Posterior vena cava (tissue), 2 donors: ENCODE measurements at regions of chr10 and their contacts with region 1.

Region 1: DNA sequence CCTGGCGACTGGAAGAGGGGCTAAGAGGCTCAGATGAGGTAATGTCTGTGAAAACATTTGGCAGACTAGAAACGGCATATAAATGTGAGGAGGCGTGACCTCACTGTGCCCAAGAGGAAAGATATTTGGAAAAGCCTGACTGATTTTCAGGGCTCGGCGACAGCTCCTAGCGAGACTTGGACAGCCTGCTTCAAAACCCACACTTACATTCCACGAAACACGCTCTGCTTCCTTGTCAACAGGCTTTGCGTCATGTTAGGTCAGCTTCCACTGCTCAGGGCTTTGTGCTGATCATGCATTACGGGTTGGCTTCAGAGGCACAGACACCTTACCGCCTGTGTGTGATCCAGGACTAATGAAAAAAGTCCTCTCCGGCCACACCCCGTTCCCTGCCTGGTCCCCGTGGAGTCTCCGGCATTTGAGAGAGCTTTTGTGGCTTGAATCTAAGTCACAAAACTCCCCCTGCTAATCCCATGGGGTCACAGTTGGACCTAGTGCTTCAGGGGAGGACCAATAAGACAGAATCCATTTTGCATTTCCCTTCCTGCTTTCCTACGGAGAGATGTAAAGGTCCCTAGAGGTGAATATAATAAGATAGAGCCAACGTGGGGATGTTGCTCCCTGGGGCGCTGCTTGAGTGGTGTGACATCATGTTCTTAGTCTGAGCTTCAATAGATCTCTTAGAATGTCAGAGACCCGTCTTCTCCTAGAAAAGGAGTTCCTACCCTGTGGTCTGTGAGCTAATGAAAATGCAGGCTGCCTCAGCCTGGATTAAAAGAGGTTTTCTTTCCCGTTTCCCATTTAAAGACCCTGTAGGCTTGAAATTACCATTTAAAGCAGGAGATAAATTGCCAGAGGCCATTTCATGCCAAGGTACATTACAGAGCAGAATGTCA is 25.5 kb downstream of the FGFBP3 start:
- DNase-seq: peak; percentile 84

Region 2: GRCh38 chr10:91805110-91805838 is 78.5 kb before region 1 on chr10:
- intact Hi-C with region 1: loop called in 1 of 2 experiments (anchors 2 kb)
- DNase-seq: no peak